Right lobe of liver (tissue), 6 donors: ENCODE measurements at regions of chr2 and their contacts with region 1.

Region 1: GRCh38 chr2:105235388-105236054 is 6.0 kb upstream of the GPR45 start:
- DNase-seq: peak; percentile 67 to 73 (median 70)
- ATAC-seq: peak; percentile 74 to 81 (median 76)
- H3K4me3 ChIP-seq: no peak overlapping the region
- H3K27ac ChIP-seq: no peak overlapping the region
- H3K4me1 ChIP-seq: no peaks in the 10 kb centered on the region
- H3K27me3 ChIP-seq: no peaks in the 10 kb centered on the region
- CTCF ChIP-seq: peak; percentile 46 to 76 (median 71)
- POLR2A ChIP-seq: no peak

Region 2: DNA sequence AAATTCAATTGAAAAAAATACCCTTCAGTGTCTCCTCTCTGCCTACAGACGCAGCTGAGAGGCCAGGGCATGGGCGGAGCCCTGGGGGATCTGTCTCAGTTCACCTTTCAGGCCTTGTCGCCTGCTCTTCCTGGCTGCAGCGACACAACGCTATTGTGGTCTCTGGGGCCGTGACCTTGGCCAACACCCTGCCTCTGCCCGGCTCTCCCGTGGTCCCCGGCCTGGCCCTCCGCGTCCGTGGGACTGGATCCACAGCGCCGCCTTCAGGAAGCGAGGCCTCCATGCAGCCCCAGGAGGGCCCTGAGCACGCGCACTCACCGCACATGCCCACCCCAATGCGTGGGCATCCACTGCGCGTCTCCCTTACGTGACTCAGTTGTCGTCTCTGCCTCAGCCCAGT is 116.6 kb before region 1 on chr2:
- intact Hi-C with region 1: loop called (anchors 5 kb)
- DNase-seq: no peak
- ATAC-seq: no peak
- H3K4me3 ChIP-seq: no peak overlapping the region
- H3K27ac ChIP-seq: no peak overlapping the region
- H3K4me1 ChIP-seq: no peaks in the 10 kb centered on the region
- H3K27me3 ChIP-seq: no peaks in the 10 kb centered on the region
- CTCF ChIP-seq: peak in 1 of 4 donors; percentile 13
- POLR2A ChIP-seq: no peak

Region 3: GRCh38 chr2:105194022-105194675 is 41.4 kb before region 1 on chr2:
- intact Hi-C with region 1: no loop called
- DNase-seq: no peak
- ATAC-seq: no peak
- H3K4me3 ChIP-seq: no peak overlapping the region
- H3K27ac ChIP-seq: no peak overlapping the region
- H3K4me1 ChIP-seq: no peaks in the 10 kb centered on the region
- H3K27me3 ChIP-seq: no peaks in the 10 kb centered on the region
- CTCF ChIP-seq: no peak
- POLR2A ChIP-seq: no peak